Activated CD4-positive, alpha-beta T cell treated with anti-CD3 and anti-CD28 coated beads, Interleukin-2, amount 10 ng/mL, durations not matched to agents 24 days and 14 days (primary cell): ENCODE measurements at regions of chr17 and their contacts with region 1.

Region 1: GRCh38 chr17:59435238-59435637 is 103.8 kb downstream of the YPEL2 start:
- DNase-seq: no peak
- H3K4me3 Mint-ChIP-seq: peak overlapping the region; percentile 43
- H3K27ac Mint-ChIP-seq: peak overlapping the region; percentile 93
- H3K4me1 Mint-ChIP-seq: peaks cover 60% of the 10 kb centered on the region
- H3K27me3 Mint-ChIP-seq: peaks cover under 1% of the 10 kb centered on the region

Region 2: GRCh38 chr17:59565171-59565969 is 130.1 kb after region 1 on chr17 and contains the start of gene DHX40:
- intact Hi-C with region 1: loop called (anchors 5 kb)
- DNase-seq: peak; percentile 98
- H3K4me3 Mint-ChIP-seq: peak within 1 kb of the TSS; percentile 100
- H3K27ac Mint-ChIP-seq: peak within 1 kb of the TSS; percentile 100
- H3K4me1 Mint-ChIP-seq: peaks cover 21% of the 10 kb centered on the region
- H3K27me3 Mint-ChIP-seq: peaks cover 2% of the 10 kb centered on the region
- total RNA-seq, gene DHX40: 17.0 and 20.5 TPM in 2 replicates